AG04449 (cell line): ENCODE measurements at regions of chr13 and their contacts with region 1.

Region 1: DNA sequence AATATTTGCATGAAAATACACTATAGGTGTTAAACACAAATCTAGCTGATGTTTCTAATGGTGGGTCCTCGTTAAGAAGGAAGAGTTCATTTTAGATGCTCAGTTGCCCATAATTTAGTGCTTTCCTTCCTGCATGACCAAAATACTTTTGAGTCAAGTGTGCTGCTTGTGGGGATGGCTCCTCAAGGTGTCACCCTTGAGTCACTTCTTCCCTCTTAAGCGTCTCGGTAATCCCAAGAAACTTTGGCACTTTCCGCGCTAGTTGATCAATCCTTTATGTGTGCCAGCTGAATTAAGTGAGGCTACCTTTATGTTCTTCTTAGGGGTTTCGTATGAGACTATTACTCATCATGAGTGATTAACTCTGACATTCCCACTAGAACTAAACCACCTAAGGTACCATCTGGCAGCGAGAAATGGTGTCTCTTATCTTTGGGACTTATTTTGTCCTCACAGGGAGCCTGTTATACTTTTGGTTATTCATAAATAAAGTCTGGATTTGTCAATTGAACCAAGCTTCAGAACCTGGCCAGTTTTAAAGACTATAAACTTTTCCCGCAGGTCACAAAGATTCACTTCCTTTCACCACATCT is 106.8 kb downstream of the NHLRC3 start:
- DNase-seq: peak; percentile 24
- H3K4me3 ChIP-seq: no peak overlapping the region
- CTCF ChIP-seq: peak; percentile 76

Region 2: GRCh38 chr13:39132286-39133230 is 12.5 kb before region 1 on chr13:
- CTCF ChIA-PET with region 1: interaction called, 15 read pairs
- POLR2A ChIA-PET with region 1: no interaction called
- DNase-seq: no peak
- H3K4me3 ChIP-seq: no peak overlapping the region
- CTCF ChIP-seq: no peak

Region 3: GRCh38 chr13:39170711-39171110 is 25.7 kb after region 1 on chr13:
- CTCF ChIA-PET with region 1: no interaction called
- POLR2A ChIA-PET with region 1: no interaction called
- DNase-seq: no peak
- H3K4me3 ChIP-seq: no peak overlapping the region
- CTCF ChIP-seq: no peak

Region 4: DNA sequence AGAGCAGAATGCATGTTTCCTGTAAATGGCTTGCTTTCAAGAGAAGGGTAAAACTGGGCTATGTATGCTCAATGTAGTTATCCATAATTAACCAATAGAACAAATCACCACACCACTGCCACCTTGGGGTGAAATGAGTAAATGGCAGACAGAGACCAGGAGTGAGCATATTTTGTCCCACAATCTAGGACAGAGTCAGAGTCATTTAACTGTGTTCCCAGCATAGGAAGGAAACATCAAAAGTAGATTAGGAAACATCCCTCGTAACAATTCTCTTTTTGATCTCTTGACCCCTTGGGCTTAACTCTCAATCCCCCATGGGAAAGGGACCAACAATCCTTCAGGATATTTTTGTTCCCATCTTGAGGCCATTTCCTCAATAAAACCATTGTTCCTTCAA is 118.0 kb after region 1 on chr13:
- CTCF ChIA-PET with region 1: interaction called, 11 read pairs
- POLR2A ChIA-PET with region 1: no interaction called
- DNase-seq: no peak
- H3K4me3 ChIP-seq: no peak overlapping the region
- CTCF ChIP-seq: peak; percentile 60

Region 5: GRCh38 chr13:39672378-39673132 is 527.5 kb after region 1 on chr13:
- CTCF ChIA-PET with region 1: interaction called, 10 read pairs
- POLR2A ChIA-PET with region 1: no interaction called
- DNase-seq: no peak
- H3K4me3 ChIP-seq: no peak overlapping the region
- CTCF ChIP-seq: no peak